Naive thymus-derived CD4-positive, alpha-beta T cell (primary cell): ENCODE measurements at regions of chr15 and their contacts with region 1.

Region 1: DNA sequence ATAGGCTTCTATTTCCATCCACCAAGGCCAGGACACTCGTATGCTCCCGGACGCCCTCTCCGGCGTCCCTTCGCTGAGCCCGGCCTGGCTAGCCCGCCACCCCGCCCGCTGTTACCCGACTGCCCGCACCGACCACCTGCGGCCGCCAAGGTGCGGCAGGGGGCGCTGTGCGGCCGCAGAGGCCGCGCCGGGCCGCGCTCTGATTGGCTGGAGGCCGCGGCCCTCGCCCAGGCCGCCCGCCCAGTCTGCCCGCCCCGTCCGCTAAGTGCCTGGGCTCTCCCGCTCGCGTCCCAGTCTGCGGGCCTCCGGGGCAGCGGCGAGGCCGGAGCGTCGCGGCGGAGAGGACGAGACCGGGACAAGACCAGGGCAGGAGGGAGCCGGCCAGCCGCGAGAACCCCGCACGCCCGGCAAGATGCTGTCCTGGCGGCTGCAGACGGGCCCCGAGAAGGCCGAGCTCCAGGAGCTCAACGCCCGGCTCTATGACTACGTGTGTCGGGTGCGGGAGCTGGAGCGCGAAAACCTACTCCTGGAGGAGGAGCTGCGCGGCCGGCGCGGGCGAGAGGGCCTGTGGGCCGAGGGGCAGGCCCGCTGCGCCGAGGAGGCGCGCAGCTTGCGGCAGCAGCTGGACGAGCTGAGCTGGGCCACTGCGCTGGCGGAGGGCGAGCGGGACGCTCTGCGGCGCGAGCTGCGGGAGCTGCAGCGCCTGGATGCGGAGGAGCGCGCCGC is at the start of gene SYNM:
- DNase-seq: peak in 5 of 9 donors; percentile 7 to 72 (median 19)
- ATAC-seq: peak; percentile 60
- H3K4me3 ChIP-seq: peak within 1 kb of the TSS; percentile 27
- H3K4me3 Mint-ChIP-seq: peak within 1 kb of the TSS in 9 of 10 donors; percentile 23 to 79 (median 59)
- H3K27ac ChIP-seq: no peak within 1 kb of the TSS
- H3K27ac Mint-ChIP-seq: peak within 1 kb of the TSS in 2 of 9 donors; percentile 29 to 82
- H3K4me1 ChIP-seq: peaks cover 0 to 12% of the 10 kb centered on the region in 2 donors
- H3K4me1 Mint-ChIP-seq: peaks cover 0 to 26% (median 9%) of the 10 kb centered on the region in 7 donors
- H3K27me3 ChIP-seq: peaks cover 0 to 5% of the 10 kb centered on the region in 2 donors
- H3K27me3 Mint-ChIP-seq: peaks cover 36 to 59% (median 39%) of the 10 kb centered on the region in 5 donors
- total RNA-seq, gene SYNM: 0.53 to 6.0 (median 2.2) TPM

Region 2: GRCh38 chr15:98800437-98801233 is 304.3 kb before region 1 on chr15:
- CTCF ChIA-PET with region 1: no interaction called
- POLR2A ChIA-PET with region 1: no interaction called
- intact Hi-C with region 1: no loop called
- DNase-seq: no peak
- ATAC-seq: peak; percentile 48
- H3K4me3 ChIP-seq: no peak overlapping the region
- H3K4me3 Mint-ChIP-seq: peak overlapping the region in 9 of 10 donors; percentile 57 to 83 (median 78)
- H3K27ac ChIP-seq: peak overlapping the region; percentile 30
- H3K27ac Mint-ChIP-seq: peak overlapping the region in 8 of 9 donors; percentile 40 to 90 (median 58)
- H3K4me1 ChIP-seq: peaks cover 0 to 38% of the 10 kb centered on the region in 2 donors
- H3K4me1 Mint-ChIP-seq: peaks cover 11 to 88% (median 84%) of the 10 kb centered on the region in 7 donors
- H3K27me3 ChIP-seq: no peaks in the 10 kb centered on the region
- H3K27me3 Mint-ChIP-seq: peaks cover 0 to 3% (median 0%) of the 10 kb centered on the region in 5 donors

Region 3: DNA sequence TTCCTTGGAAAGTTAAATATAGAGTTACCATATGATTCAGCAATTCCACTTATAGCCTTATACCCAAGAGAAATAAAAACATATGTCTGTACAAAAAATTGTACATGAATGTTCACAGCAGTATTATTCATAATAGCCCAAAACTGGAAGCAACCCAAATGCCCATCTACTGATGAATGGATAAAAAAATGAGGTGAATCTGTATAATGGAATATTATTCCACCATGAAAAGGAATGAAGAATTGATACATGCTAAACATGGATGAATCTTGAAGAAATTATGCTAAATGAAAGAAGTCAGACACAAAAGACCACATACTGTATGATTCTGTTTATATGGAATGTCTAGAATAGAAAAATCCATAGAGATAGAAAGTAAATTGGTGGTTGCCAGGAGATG is 83.0 kb after region 1 on chr15:
- CTCF ChIA-PET with region 1: no interaction called
- POLR2A ChIA-PET with region 1: no interaction called
- intact Hi-C with region 1: no loop called
- DNase-seq: no peak
- ATAC-seq: no peak
- H3K4me3 ChIP-seq: no peak overlapping the region
- H3K4me3 Mint-ChIP-seq: no peak overlapping the region
- H3K27ac ChIP-seq: no peak overlapping the region
- H3K27ac Mint-ChIP-seq: no peak overlapping the region
- H3K4me1 ChIP-seq: no peaks in the 10 kb centered on the region
- H3K4me1 Mint-ChIP-seq: no peaks in the 10 kb centered on the region
- H3K27me3 ChIP-seq: no peaks in the 10 kb centered on the region
- H3K27me3 Mint-ChIP-seq: peaks cover 0 to 3% (median 0%) of the 10 kb centered on the region in 5 donors

Region 4: GRCh38 chr15:99213187-99213811 is 108.3 kb after region 1 on chr15:
- CTCF ChIA-PET with region 1: interaction called, 3 read pairs
- POLR2A ChIA-PET with region 1: no interaction called
- intact Hi-C with region 1: loop called (anchors 1 kb)
- DNase-seq: peak in 8 of 9 donors; percentile 11 to 54 (median 36)
- ATAC-seq: peak; percentile 69
- H3K4me3 ChIP-seq: no peak overlapping the region
- H3K4me3 Mint-ChIP-seq: no peak overlapping the region
- H3K27ac ChIP-seq: no peak overlapping the region
- H3K27ac Mint-ChIP-seq: no peak overlapping the region
- H3K4me1 ChIP-seq: no peaks in the 10 kb centered on the region
- H3K4me1 Mint-ChIP-seq: no peaks in the 10 kb centered on the region
- H3K27me3 ChIP-seq: no peaks in the 10 kb centered on the region
- H3K27me3 Mint-ChIP-seq: peaks cover 0 to 19% (median 6%) of the 10 kb centered on the region in 5 donors